ENCODE measurements at regions of chr3 and their contacts with region 1.

Region 1: GRCh38 chr3:139329345-139329850 is 14.4 kb upstream of the MRPS22 start:
- DNase-seq: peak; percentile 93
- ATAC-seq: peak; percentile 99

Region 2: DNA sequence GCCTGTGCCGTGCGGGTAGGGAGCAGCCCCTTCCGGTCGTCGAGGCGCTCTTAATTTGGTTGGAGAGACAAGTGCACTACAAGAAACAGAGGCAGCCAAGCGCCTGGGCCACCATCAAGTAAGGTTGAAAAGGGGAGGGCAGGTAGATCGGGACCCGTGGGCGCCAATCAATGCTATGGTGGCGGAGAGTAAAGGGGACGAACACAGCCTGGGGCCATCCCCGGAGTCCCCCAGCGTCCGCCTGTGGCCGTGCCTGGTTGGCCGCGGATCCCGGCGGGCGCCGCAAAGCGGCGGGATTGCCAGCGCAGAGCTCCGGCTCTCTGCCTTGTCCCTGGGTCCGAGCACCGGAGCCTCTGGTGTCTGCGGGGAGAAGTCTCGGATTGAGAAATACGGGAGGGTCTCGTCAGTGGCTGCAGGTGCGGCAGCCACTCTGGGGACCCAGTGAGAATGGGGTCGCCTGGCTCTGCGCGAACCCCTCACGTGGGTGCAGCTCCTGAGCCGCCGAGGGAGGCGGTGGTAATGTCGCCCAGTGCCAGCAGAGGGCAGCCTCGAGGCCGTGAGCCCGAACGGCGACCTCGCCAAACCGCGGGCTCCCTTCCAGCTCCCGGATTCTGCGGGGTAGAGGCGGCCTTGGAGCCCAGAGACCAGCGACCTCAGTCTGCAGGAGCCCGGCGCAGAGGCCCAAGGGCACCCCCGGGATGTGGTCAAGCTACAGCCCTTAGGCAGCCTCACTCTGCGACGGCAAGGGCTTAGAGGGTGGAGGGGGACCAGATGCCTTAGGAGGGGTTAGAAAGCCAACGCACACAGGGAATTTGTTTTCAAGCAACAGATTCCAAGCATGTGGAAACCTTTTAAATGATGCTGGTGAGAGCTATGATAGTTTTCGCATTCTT is 393.3 kb before region 1 on chr3:
- intact Hi-C with region 1: loop called (anchors 5 kb)
- DNase-seq: peak; percentile 90
- ATAC-seq: peak; percentile 89

Region 3: GRCh38 chr3:139111392-139112229 is 217.8 kb before region 1 on chr3:
- intact Hi-C with region 1: loop called (anchors 2 kb)
- DNase-seq: peak; percentile 55
- ATAC-seq: peak; percentile 82

Measured in Right ventricle myocardium superior (tissue), 1 donor.